ENCODE measurements at regions of chrX and their contacts with region 1.

Region 1: DNA sequence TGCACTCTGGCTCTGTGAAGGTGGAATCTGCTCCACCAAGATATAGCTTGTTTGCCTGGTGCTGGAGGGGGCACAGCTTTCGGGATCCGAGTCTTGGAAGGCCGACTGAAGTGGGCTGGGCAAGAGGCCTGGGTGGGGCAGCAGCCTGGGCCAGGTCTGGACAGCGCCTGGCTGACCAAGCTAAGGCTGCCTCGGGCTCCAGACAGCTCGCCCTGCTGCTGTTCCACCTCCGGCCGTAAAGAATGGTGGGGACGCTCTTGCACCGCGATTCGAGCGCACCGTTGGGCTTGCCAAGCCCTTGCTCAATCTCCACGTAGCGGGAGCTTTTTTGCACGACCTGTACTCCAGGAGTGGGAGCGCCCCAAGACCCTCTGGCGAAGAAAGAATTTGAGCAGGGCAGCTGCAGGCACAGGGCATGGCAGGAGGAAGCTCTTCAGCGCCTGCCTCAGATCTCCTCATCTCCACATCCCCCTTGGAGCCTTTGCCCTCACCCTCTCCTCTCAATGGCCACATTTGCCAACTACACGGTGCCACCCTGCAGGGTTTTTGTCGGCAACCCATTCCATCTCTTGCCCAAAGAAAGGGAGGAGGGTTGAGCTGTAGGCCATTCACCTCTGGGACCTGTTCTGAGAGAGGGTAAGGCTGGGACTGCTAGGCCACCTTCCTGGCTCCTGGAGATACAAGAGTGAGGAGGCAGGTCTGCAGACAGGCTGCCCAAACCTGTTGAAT is 18.9 kb downstream of the CNGA2 start:
- DNase-seq: no peak
- H3K4me3 ChIP-seq: no peak overlapping the region
- CTCF ChIP-seq: peak; percentile 79

Region 2: DNA sequence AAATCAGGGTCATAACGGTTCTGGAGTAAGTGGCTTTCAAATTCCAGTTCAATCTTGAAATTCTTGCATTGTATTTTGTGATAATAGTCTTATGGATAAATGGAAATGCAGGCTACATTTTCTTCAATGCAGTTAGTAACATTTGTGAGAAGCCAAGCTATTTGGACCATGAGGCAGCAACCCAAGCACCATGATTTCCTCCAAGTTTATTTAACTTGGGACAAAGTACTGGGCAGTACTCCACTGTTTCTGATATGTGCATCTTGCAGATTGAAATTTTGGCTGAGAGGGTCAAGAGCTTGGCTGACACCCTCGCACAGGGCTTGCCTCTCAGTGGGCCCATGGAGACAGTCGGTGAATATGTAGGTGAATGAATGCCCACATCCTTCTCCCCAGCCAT is 20.9 kb after region 1 on chrX:
- CTCF ChIA-PET with region 1: no interaction called
- POLR2A ChIA-PET with region 1: no interaction called
- DNase-seq: no peak
- H3K4me3 ChIP-seq: no peak overlapping the region
- CTCF ChIP-seq: no peak

Region 3: GRCh38 chrX:152117305-152117704 is 363.8 kb after region 1 on chrX:
- CTCF ChIA-PET with region 1: no interaction called
- POLR2A ChIA-PET with region 1: no interaction called
- DNase-seq: no peak
- H3K4me3 ChIP-seq: no peak overlapping the region
- CTCF ChIP-seq: no peak

Region 4: GRCh38 chrX:152632445-152633097 is 879.1 kb after region 1 on chrX:
- CTCF ChIA-PET with region 1: interaction called, 303 read pairs
- POLR2A ChIA-PET with region 1: interaction called, 3 read pairs
- DNase-seq: no peak
- H3K4me3 ChIP-seq: no peak overlapping the region
- CTCF ChIP-seq: peak; percentile 67

Region 5: DNA sequence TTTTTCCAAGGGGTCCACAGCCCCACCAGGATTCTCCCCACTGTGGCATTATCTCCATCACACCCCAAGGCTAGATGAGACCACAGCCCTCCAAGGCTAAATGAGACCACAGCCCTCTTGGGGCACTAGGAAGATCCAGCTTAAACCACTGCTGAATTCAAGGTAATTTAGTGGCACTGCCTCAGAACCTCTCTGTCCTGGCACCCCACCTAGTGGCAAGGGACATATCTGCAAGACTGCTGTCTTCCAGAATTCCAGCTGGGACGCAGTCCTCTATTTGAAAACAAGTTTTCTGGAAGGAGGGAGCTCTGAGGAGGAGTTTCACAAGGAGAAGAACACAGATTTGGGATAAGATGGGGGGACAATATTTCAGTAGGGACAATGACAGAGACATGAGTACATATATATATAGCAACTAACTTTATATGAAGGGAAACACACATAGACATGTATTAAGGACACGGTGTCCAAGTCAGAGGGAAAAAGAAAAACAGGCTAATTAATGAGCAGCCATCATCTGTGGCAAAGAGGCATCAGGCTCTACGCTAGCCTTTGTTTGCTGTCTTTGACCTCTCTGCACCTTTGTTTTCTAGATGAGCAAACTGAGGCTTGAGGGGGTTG is 1067.8 kb after region 1 on chrX:
- CTCF ChIA-PET with region 1: interaction called, 13 read pairs
- POLR2A ChIA-PET with region 1: no interaction called
- DNase-seq: no peak
- H3K4me3 ChIP-seq: no peak overlapping the region
- CTCF ChIP-seq: peak; percentile 50